ENCODE measurements at regions of chr1 and their contacts with region 1.

Region 1: GRCh38 chr1:95742591-95743089 is 508.6 kb downstream of the RWDD3 start:
- DNase-seq: peak; percentile 97
- H3K4me3 Mint-ChIP-seq: peak overlapping the region; percentile 11
- H3K27ac Mint-ChIP-seq: peak overlapping the region; percentile 90
- H3K4me1 Mint-ChIP-seq: peaks cover 28% of the 10 kb centered on the region
- H3K27me3 Mint-ChIP-seq: no peaks in the 10 kb centered on the region
- CTCF ChIP-seq: no peak

Region 2: GRCh38 chr1:95723346-95723745 is 19.3 kb before region 1 on chr1:
- CTCF ChIA-PET with region 1: interaction called, 17 read pairs
- POLR2A ChIA-PET with region 1: interaction called, 4 read pairs
- intact Hi-C with region 1: no loop called
- DNase-seq: peak; percentile 94
- H3K4me3 Mint-ChIP-seq: no peak overlapping the region
- H3K27ac Mint-ChIP-seq: no peak overlapping the region
- H3K4me1 Mint-ChIP-seq: peaks cover 14% of the 10 kb centered on the region
- H3K27me3 Mint-ChIP-seq: no peaks in the 10 kb centered on the region
- CTCF ChIP-seq: no peak

Region 3: DNA sequence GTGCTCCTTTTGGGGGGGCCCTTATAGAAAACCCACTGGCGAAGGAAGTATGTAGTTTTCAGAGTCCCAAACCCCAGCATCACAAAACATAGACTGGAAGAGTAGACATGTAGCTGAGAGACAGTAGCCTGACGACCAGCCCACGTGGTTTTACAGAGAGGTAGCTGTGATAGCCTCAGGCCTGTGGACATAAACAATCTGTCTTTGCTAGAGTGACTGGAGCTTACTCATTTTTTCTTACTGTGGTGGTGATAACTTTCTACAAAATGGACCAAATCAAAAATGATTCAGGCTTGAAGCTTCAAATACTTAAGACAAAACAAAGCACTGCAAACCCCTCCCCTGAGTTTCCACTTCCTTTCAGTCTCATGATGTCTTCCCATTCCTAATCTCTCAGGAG is 11.7 kb before region 1 on chr1:
- CTCF ChIA-PET with region 1: interaction called, 17 read pairs
- POLR2A ChIA-PET with region 1: interaction called, 16 read pairs
- intact Hi-C with region 1: no loop called
- DNase-seq: peak; percentile 54
- H3K4me3 Mint-ChIP-seq: no peak overlapping the region
- H3K27ac Mint-ChIP-seq: peak overlapping the region; percentile 40
- H3K4me1 Mint-ChIP-seq: peaks cover 16% of the 10 kb centered on the region
- H3K27me3 Mint-ChIP-seq: no peaks in the 10 kb centered on the region
- CTCF ChIP-seq: no peak